Caco-2 (cell line): ENCODE measurements at regions of chr13 and their contacts with region 1.

Region 1: DNA sequence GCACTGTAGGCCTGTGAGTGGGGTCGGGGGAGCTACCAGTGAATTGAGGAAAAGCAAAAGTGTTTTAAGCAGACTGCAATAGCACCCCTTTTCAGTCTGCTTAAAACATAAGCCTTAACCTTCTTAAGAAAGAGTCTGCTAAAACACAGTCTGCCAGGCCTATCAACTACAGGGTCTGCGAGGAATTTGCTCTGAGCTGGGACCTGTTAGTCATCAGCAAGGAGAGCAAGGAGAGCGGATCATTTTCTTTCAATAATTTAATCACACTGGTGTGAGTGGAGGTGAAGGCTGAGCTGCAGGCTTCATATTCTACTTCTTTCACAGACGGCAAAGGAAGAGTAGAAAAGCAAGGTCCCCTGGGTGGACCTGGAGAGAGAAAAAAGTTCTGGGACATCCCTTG is 342.7 kb downstream of the ENOX1 start:
- DNase-seq: no peak
- H3K4me3 ChIP-seq: no peak overlapping the region
- H3K4me3 Mint-ChIP-seq: no peak overlapping the region
- H3K27ac Mint-ChIP-seq: no peak overlapping the region
- H3K4me1 ChIP-seq: no peaks in the 10 kb centered on the region
- H3K4me1 Mint-ChIP-seq: peaks cover 9% of the 10 kb centered on the region
- H3K27me3 ChIP-seq: no peaks in the 10 kb centered on the region
- H3K27me3 Mint-ChIP-seq: no peaks in the 10 kb centered on the region
- CTCF ChIP-seq: no peak

Region 2: DNA sequence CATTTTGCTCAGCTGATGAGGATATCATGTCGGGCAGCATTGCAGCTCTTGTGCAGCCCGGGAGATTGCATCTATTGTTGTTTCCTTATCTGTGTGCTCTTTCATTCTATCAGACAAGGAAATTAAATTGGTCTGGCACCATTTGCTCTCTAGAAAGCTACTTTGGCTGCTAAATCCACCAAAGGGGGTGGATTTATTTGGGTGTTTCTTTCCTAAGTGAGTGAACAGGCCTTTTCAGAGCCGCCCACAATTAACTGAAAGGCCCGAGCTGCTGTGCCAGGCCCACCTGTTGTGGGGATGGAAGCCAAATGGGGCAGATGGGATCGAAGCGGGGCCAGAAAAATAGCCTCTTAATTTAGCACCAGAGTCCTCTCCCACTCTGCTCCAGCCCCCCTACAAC is 321.3 kb before region 1 on chr13:
- CTCF ChIA-PET with region 1: no interaction called
- POLR2A ChIA-PET with region 1: interaction called, 12 read pairs
- intact Hi-C with region 1: no loop called
- DNase-seq: no peak
- H3K4me3 ChIP-seq: no peak overlapping the region
- H3K4me3 Mint-ChIP-seq: no peak overlapping the region
- H3K27ac Mint-ChIP-seq: no peak overlapping the region
- H3K4me1 ChIP-seq: no peaks in the 10 kb centered on the region
- H3K4me1 Mint-ChIP-seq: peaks cover 9% of the 10 kb centered on the region
- H3K27me3 ChIP-seq: no peaks in the 10 kb centered on the region; the same call in 1 of the 2 replicates
- H3K27me3 Mint-ChIP-seq: no peaks in the 10 kb centered on the region
- CTCF ChIP-seq: no peak